GM10248 (cell line): ENCODE measurements at regions of chr3 and their contacts with region 1.

Region 1: GRCh38 chr3:143276592-143276991 is 157.0 kb downstream of the CHST2 start:
- DNase-seq: peak; percentile 11
- CTCF ChIP-seq: no peak

Region 2: DNA sequence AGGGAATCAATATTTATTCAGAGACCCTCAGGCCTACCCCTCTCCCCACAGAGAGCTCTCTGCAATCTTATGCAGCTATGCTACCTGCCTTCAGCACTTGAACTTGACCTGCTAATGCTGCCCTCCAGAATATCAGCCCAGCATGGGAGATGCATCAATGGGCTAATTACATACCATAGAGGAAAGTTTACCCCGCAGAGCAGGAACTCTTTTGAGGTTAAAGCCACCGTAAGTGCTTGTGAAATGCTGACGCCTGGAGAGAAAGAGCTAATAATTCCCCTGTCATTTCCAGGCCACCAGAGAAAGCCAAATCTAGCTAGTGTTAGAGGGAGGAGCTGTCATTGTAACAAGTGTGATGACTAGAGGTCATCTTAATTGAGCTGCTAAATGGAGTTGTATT is 29.5 kb before region 1 on chr3:
- CTCF ChIA-PET with region 1: interaction called, 10 read pairs
- POLR2A ChIA-PET with region 1: no interaction called
- DNase-seq: no peak
- CTCF ChIP-seq: no peak

Region 3: DNA sequence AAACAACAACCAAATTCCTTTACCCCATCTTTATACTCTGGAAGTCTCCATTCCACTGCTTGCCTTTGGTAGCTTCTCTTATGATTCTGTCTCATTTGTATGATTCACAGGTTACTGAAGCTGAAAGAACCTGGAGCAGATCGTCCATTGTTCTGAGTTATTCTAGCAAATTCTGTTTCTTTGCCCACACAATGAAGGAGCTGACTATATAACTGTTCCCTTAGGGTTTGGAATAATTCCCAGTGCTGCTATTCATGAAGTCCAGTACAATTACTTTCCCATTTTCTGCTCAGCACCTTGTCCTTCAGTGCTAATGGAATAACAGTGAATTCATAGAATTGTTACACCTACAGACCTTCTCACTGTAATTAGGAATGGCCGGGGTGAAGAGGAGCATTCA is 10.8 kb after region 1 on chr3:
- CTCF ChIA-PET with region 1: interaction called, 18 read pairs
- POLR2A ChIA-PET with region 1: no interaction called
- DNase-seq: no peak
- CTCF ChIP-seq: no peak